Astrocyte of the cerebellum (primary cell): ENCODE measurements at regions of chr14 and their contacts with region 1.

Region 1: GRCh38 chr14:62847168-62847567 is 198.1 kb downstream of the KCNH5 start:
- DNase-seq: no peak
- H3K4me3 ChIP-seq: no peak overlapping the region
- CTCF ChIP-seq: no peak

Region 2: GRCh38 chr14:62889364-62889763 is 42.2 kb after region 1 on chr14:
- in situ Hi-C with region 1: loop called (anchors 5 kb)
- DNase-seq: no peak
- H3K4me3 ChIP-seq: no peak overlapping the region
- CTCF ChIP-seq: no peak